GM12878 (cell line): ENCODE measurements at regions of chr16 and their contacts with region 1.

Region 1: GRCh38 chr16:31354394-31355291 is at the start of gene ITGAX:
- DNase-seq: peak; percentile 70
- ATAC-seq: peak; percentile 85
- H3K4me3 ChIP-seq: peak within 1 kb of the TSS; percentile 35; the same call in 1 of the 2 replicates
- H3K27ac ChIP-seq: peak within 1 kb of the TSS; percentile 79
- H3K4me1 ChIP-seq: peaks cover 55% of the 10 kb centered on the region
- H3K27me3 ChIP-seq: no peaks in the 10 kb centered on the region
- CTCF ChIP-seq: no peak
- EP300 ChIP-seq: peak in 1 of 2 experiments; percentile 74; a peak in 2 of 4 replicates
- POLR2A ChIP-seq: peak; percentile 45
- RAD21 ChIP-seq: no peak
- polyA plus RNA-seq, gene ITGAX: 1.6 to 3.2 TPM

Region 2: DNA sequence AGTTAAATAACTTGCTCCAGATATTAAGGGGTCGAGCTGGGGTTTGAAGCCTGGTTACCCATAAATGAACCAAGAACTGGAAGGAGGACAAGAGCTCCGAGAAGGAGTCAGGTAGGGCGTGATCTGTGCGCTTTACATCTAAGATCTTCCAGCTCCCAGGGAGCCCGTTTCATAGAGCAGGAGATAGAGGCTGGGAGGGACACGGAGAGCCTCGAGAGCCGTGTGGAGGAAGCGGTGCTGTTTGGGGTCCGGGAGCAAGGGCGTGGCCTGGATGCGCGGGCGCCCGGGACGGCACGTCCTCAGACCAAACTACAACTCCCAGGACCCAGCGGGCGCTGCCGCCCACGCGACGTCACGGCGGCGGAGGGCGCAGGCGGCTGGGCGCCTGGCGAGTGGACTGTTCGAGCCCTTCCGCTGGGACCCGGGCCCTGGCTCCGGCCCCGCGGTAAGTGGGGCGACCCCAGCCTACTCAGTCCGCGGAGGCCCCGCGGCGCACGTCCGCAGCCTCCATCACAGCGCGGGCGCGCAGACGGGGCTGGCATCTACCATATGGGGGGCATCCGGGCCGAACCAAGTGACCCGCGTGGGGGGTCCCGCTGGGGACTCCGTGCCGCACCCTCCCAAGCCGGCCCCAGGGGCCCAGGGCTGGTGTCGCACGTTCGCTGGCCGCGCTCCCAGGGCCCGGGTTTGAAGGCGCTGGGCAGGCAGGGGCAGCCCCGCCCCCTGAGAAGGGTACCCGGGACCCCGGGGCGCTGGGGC is 246.4 kb before region 1 on chr16 and contains the start of gene BCKDK:
- CTCF ChIA-PET with region 1: no interaction called
- POLR2A ChIA-PET with region 1: no interaction called
- RAD21 ChIA-PET with region 1: no interaction called
- SMC1A ChIA-PET with region 1: no interaction called
- in situ Hi-C with region 1: no loop called
- intact Hi-C with region 1: no loop called
- DNase-seq: peak; percentile 32
- ATAC-seq: peak; percentile 96
- H3K4me3 ChIP-seq: peak within 1 kb of the TSS; percentile 74
- H3K27ac ChIP-seq: peak within 1 kb of the TSS; percentile 81
- H3K4me1 ChIP-seq: peaks cover 22% of the 10 kb centered on the region
- H3K27me3 ChIP-seq: no peaks in the 10 kb centered on the region
- CTCF ChIP-seq: no peak
- EP300 ChIP-seq: no peak
- POLR2A ChIP-seq: peak; percentile 66
- RAD21 ChIP-seq: no peak
- polyA plus RNA-seq, gene BCKDK: 0.68 to 3.3 TPM

Region 3: GRCh38 chr16:31333686-31334649 is 20.7 kb before region 1 on chr16:
- CTCF ChIA-PET with region 1: interaction called, 12 read pairs
- POLR2A ChIA-PET with region 1: no interaction called
- RAD21 ChIA-PET with region 1: interaction called, 5 read pairs
- SMC1A ChIA-PET with region 1: no interaction called
- in situ Hi-C with region 1: no loop called
- intact Hi-C with region 1: no loop called
- DNase-seq: no peak
- ATAC-seq: peak; percentile 96
- H3K4me3 ChIP-seq: no peak overlapping the region
- H3K27ac ChIP-seq: no peak overlapping the region
- H3K4me1 ChIP-seq: no peaks in the 10 kb centered on the region
- H3K27me3 ChIP-seq: no peaks in the 10 kb centered on the region
- CTCF ChIP-seq: peak; percentile 63 to 80 (median 77)
- EP300 ChIP-seq: no peak
- POLR2A ChIP-seq: no peak
- RAD21 ChIP-seq: peak; percentile 92

Region 4: GRCh38 chr16:31365131-31365865 is 10.7 kb after region 1 on chr16:
- CTCF ChIA-PET with region 1: no interaction called
- POLR2A ChIA-PET with region 1: interaction called, 3 read pairs
- RAD21 ChIA-PET with region 1: interaction called, 11 read pairs
- SMC1A ChIA-PET with region 1: interaction called, 7 read pairs
- in situ Hi-C with region 1: no loop called
- intact Hi-C with region 1: no loop called
- DNase-seq: no peak
- ATAC-seq: peak; percentile 95
- H3K4me3 ChIP-seq: no peak overlapping the region
- H3K27ac ChIP-seq: no peak overlapping the region
- H3K4me1 ChIP-seq: peaks cover 6% of the 10 kb centered on the region
- H3K27me3 ChIP-seq: no peaks in the 10 kb centered on the region
- CTCF ChIP-seq: no peak
- EP300 ChIP-seq: 0 out of 4 replicates have a peak, but pooled peaks of 1 of the 2 experiments have one; percentile 38
- POLR2A ChIP-seq: no peak
- RAD21 ChIP-seq: no peak